MCF 10A (cell line): ENCODE measurements at regions of chr2 and their contacts with region 1.

Region 1: DNA sequence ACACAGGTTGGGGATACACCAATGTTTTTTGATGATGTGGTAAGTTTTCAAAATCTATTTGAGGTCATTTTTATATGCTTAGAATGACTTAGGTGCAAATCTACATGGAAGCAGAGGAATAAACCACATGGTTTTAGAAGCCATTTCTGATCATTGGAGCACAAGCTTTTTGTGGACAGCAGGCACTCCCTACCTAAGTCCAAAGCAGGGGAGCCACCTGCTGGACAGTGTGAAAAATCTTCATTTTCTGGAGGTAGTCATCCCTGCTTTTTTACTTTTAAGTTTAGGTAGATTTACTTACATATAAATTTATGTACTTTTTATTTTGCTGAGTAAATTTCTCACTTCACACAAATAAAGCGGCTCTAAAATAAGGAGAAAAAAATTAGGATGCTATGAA is 323.2 kb downstream of the PLCL1 start:
- DNase-seq: peak; percentile 76
- H3K4me3 Mint-ChIP-seq: no peak overlapping the region
- H3K27ac Mint-ChIP-seq: no peak overlapping the region
- H3K4me1 Mint-ChIP-seq: no peaks in the 10 kb centered on the region
- H3K27me3 Mint-ChIP-seq: peaks cover 35% of the 10 kb centered on the region
- CTCF ChIP-seq: peak; percentile 62

Region 2: DNA sequence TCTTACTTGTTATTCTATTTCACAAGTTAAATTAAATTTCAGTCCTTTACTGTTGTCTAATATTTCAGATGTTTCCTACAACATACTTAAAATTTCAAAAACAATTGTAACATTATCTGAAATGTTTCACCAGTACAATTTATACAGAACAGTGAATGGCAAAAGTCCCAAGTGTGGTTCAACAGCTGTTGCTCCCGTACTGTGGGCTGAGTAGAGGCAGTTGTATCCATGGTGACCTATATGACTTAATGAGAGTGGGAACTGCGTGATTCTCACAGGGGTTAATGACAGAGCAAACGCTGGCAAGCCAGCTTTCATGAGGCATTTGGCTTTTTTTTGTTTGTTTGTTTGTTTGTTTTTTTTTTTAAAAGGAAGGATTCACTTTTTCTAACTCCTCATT is 328.6 kb before region 1 on chr2:
- CTCF ChIA-PET with region 1: interaction called, 47 read pairs
- POLR2A ChIA-PET with region 1: interaction called, 3 read pairs
- intact Hi-C with region 1: loop called (anchors 1 kb)
- DNase-seq: no peak
- H3K4me3 Mint-ChIP-seq: no peak overlapping the region
- H3K27ac Mint-ChIP-seq: no peak overlapping the region
- H3K4me1 Mint-ChIP-seq: peaks cover 3% of the 10 kb centered on the region
- H3K27me3 Mint-ChIP-seq: no peaks in the 10 kb centered on the region
- CTCF ChIP-seq: no peak

Region 3: DNA sequence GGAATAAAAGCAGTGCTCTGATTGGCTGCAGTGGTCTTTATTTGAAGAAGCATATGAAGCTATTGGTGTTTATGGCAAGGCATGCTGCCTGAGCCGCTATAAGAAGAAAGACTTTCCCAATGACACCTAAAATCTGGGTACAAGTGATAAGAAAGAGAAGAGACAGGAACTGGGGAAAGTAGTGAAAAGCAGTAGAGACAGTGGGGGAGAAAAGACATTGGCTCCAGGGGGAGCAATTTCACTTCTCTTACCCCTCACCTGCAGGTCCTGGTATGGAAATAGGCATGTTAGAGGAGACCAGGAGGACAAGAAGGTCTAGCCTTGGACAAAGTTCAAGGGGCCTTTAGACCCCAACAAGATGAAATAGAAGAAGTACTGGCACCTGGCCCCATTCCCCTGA is 276.2 kb before region 1 on chr2:
- CTCF ChIA-PET with region 1: interaction called, 7 read pairs
- POLR2A ChIA-PET with region 1: no interaction called
- intact Hi-C with region 1: loop called (anchors 1 kb)
- DNase-seq: peak; percentile 40
- H3K4me3 Mint-ChIP-seq: no peak overlapping the region
- H3K27ac Mint-ChIP-seq: no peak overlapping the region
- H3K4me1 Mint-ChIP-seq: peaks cover 14% of the 10 kb centered on the region
- H3K27me3 Mint-ChIP-seq: no peaks in the 10 kb centered on the region
- CTCF ChIP-seq: peak; percentile 11

Region 4: GRCh38 chr2:198102856-198103255 is 24.8 kb before region 1 on chr2:
- CTCF ChIA-PET with region 1: interaction called, 11 read pairs
- POLR2A ChIA-PET with region 1: no interaction called
- intact Hi-C with region 1: no loop called
- DNase-seq: no peak
- H3K4me3 Mint-ChIP-seq: no peak overlapping the region
- H3K27ac Mint-ChIP-seq: no peak overlapping the region
- H3K4me1 Mint-ChIP-seq: peaks cover 11% of the 10 kb centered on the region
- H3K27me3 Mint-ChIP-seq: no peaks in the 10 kb centered on the region
- CTCF ChIP-seq: no peak